Naive thymus-derived CD4-positive, alpha-beta T cell (primary cell): ENCODE measurements at regions of chr2 and their contacts with region 1.

Region 1: GRCh38 chr2:10408649-10409579 is 39.2 kb downstream of the ODC1 start:
- DNase-seq: peak; percentile 65 to 85 (median 80)
- ATAC-seq: peak; percentile 91
- H3K4me3 ChIP-seq: peak overlapping the region; percentile 35
- H3K4me3 Mint-ChIP-seq: peak overlapping the region; percentile 64 to 89 (median 78)
- H3K27ac ChIP-seq: peak overlapping the region; percentile 33
- H3K27ac Mint-ChIP-seq: peak overlapping the region; percentile 66 to 96 (median 86)
- H3K4me1 ChIP-seq: peaks cover 29 to 39% of the 10 kb centered on the region in 2 donors
- H3K4me1 Mint-ChIP-seq: peaks cover 29 to 52% (median 41%) of the 10 kb centered on the region in 7 donors
- H3K27me3 ChIP-seq: no peaks in the 10 kb centered on the region
- H3K27me3 Mint-ChIP-seq: no peaks in the 10 kb centered on the region

Region 2: GRCh38 chr2:10072656-10073480 is 336.0 kb before region 1 on chr2:
- CTCF ChIA-PET with region 1: interaction called, 13 read pairs
- POLR2A ChIA-PET with region 1: no interaction called
- intact Hi-C with region 1: loop called (anchors 1 kb)
- DNase-seq: peak; percentile 54 to 82 (median 77)
- ATAC-seq: peak; percentile 97
- H3K4me3 ChIP-seq: no peak overlapping the region
- H3K4me3 Mint-ChIP-seq: peak overlapping the region in 1 of 10 donors; percentile 0
- H3K27ac ChIP-seq: no peak overlapping the region
- H3K27ac Mint-ChIP-seq: no peak overlapping the region
- H3K4me1 ChIP-seq: no peaks in the 10 kb centered on the region
- H3K4me1 Mint-ChIP-seq: peaks cover 0 to 6% (median 3%) of the 10 kb centered on the region in 7 donors
- H3K27me3 ChIP-seq: peaks cover 0 to 3% of the 10 kb centered on the region in 2 donors
- H3K27me3 Mint-ChIP-seq: peaks cover 43 to 53% (median 50%) of the 10 kb centered on the region in 5 donors

Region 3: DNA sequence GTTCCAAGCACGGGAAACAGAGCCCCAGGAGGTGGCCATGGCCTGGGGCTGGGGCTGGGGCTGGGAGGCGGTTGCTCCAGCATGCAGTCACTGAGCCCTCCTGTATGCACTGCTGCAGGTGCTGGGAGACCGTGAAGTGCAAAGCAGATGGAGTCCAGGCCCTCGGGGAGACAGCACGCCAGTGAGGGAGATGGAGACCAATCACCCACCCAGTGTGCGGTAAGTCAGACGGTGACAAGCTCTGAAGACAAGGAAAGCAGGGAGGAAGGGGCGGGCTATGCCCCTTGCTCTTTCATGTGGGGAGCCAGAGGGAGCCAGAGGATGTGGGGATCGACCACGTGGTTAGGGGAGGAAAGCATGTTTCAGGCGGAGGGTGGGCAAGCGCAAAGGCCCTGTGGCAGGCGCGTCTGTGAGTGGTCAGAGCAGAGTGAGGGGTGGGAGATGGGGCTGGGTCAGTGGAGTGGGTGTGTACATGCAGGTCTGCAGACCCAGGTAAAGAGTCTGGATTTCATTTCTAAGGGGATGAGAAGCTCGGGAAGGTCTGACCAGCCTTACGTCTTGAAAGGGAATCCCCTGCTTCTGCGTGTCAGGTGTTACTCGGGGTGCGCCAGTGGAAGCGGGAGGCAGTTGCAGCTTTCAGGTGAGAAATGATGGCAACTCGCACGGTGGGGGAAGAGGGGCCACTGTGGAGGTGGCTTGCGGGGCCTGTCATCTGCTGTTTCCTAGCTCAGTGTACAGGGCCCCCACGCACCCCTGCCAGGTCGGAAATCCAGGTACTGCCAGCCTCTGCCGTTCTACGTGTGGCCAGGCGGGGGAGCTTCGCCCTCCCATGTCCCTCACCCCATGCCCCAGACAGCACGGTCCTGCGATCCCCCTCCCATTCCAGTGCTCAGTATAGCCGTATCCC is 266.9 kb before region 1 on chr2:
- CTCF ChIA-PET with region 1: interaction called, 23 read pairs
- POLR2A ChIA-PET with region 1: no interaction called
- intact Hi-C with region 1: loop called (anchors 1 to 5 kb)
- DNase-seq: peak in 6 of 9 donors; percentile 32 to 63 (median 55)
- ATAC-seq: peak; percentile 64
- H3K4me3 ChIP-seq: no peak overlapping the region
- H3K4me3 Mint-ChIP-seq: peak overlapping the region in 9 of 10 donors; percentile 52 to 80 (median 73)
- H3K27ac ChIP-seq: no peak overlapping the region
- H3K27ac Mint-ChIP-seq: peak overlapping the region in 7 of 9 donors; percentile 56 to 84 (median 71)
- H3K4me1 ChIP-seq: peaks cover 0 to 18% of the 10 kb centered on the region in 2 donors
- H3K4me1 Mint-ChIP-seq: peaks cover 17 to 43% (median 31%) of the 10 kb centered on the region in 7 donors
- H3K27me3 ChIP-seq: no peaks in the 10 kb centered on the region
- H3K27me3 Mint-ChIP-seq: no peaks in the 10 kb centered on the region

Region 4: GRCh38 chr2:10267551-10268465 is 141.1 kb before region 1 on chr2:
- CTCF ChIA-PET with region 1: interaction called, 81 read pairs
- POLR2A ChIA-PET with region 1: interaction called, 11 read pairs
- intact Hi-C with region 1: loop called (anchors 1 kb)
- DNase-seq: no peak
- ATAC-seq: no peak
- H3K4me3 ChIP-seq: no peak overlapping the region
- H3K4me3 Mint-ChIP-seq: no peak overlapping the region
- H3K27ac ChIP-seq: no peak overlapping the region
- H3K27ac Mint-ChIP-seq: no peak overlapping the region
- H3K4me1 ChIP-seq: peaks cover 0 to 8% of the 10 kb centered on the region in 2 donors
- H3K4me1 Mint-ChIP-seq: peaks cover 5 to 13% (median 11%) of the 10 kb centered on the region in 7 donors
- H3K27me3 ChIP-seq: no peaks in the 10 kb centered on the region
- H3K27me3 Mint-ChIP-seq: no peaks in the 10 kb centered on the region

Region 5: GRCh38 chr2:10369269-10370255 is 39.4 kb before region 1 on chr2:
- CTCF ChIA-PET with region 1: no interaction called
- POLR2A ChIA-PET with region 1: no interaction called
- intact Hi-C with region 1: no loop called
- DNase-seq: no peak
- ATAC-seq: no peak
- H3K4me3 ChIP-seq: no peak overlapping the region
- H3K4me3 Mint-ChIP-seq: peak overlapping the region in 1 of 10 donors; percentile 6
- H3K27ac ChIP-seq: no peak overlapping the region
- H3K27ac Mint-ChIP-seq: peak overlapping the region in 6 of 9 donors; percentile 10 to 88 (median 76)
- H3K4me1 ChIP-seq: no peaks in the 10 kb centered on the region
- H3K4me1 Mint-ChIP-seq: peaks cover 8 to 75% (median 65%) of the 10 kb centered on the region in 7 donors
- H3K27me3 ChIP-seq: no peaks in the 10 kb centered on the region
- H3K27me3 Mint-ChIP-seq: no peaks in the 10 kb centered on the region

Region 6: DNA sequence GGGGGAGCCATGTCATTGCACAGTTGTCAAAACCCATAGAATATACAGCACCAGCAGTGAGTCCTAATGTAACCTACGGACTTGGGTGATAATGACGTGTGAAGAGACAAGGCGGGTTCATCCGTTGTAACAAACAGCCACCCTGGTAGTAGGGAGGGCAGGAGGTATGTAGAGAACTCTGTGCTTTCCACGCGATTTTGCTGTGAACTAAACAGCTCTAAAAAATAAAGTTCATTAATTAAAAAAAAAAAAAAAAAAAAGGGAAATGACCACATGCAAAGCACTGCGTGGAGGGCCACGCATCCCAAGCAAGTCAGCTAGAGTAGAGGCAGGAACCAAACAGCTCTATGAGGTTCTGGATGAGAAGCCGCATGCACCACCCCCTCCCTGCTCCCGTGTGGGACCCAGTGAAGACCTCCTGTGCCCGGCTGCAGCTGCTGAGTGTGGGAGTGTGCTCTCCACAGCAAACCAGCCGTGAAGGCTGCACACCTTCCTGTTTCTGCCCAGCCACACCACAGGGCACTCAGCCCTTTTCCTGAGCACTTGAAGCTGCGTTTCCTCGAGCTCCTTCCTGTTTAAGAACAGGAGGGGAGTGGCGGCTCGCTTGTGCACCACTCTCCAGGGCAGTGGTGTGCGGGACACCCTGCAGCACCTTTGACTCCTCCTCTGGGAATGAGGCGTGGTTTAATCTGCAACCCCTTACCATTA is 26.4 kb before region 1 on chr2:
- CTCF ChIA-PET with region 1: interaction called, 32 read pairs
- POLR2A ChIA-PET with region 1: interaction called, 9 read pairs
- intact Hi-C with region 1: loop called in 1 of 2 experiments (anchors 1 kb)
- DNase-seq: peak in 7 of 9 donors; percentile 59 to 81 (median 73)
- ATAC-seq: peak; percentile 91
- H3K4me3 ChIP-seq: peak overlapping the region; percentile 57
- H3K4me3 Mint-ChIP-seq: peak overlapping the region; percentile 46 to 86 (median 81)
- H3K27ac ChIP-seq: peak overlapping the region; percentile 64
- H3K27ac Mint-ChIP-seq: peak overlapping the region in 8 of 9 donors; percentile 66 to 96 (median 91)
- H3K4me1 ChIP-seq: peaks cover 57 to 90% of the 10 kb centered on the region in 2 donors
- H3K4me1 Mint-ChIP-seq: peaks cover 70 to 96% (median 93%) of the 10 kb centered on the region in 7 donors
- H3K27me3 ChIP-seq: no peaks in the 10 kb centered on the region
- H3K27me3 Mint-ChIP-seq: no peaks in the 10 kb centered on the region